IMR-90 (cell line): ENCODE measurements at regions of chr12 and their contacts with region 1.

Region 1: DNA sequence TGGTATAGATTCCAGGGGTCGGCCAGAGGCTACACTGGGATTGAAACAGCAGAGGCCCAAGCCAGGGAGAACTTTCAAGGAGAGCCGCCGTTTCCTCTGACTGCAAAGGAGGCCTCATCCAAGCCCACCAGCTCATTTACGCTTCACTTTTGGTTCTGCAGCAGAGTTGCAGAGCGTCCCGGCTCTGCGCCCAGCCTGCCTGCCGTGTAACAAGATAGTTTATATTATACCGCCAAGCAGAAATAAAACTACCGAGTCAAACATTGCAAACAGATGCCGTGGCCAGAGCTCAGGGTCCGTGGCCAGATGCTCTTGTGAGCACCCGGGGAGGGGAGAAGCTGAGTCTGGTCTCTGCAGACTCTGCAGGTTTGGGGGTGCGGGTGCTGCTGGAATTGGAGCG is 60.7 kb upstream of the TBX3 start:
- DNase-seq: peak; percentile 93
- ATAC-seq: peak; percentile 83
- H3K4me3 ChIP-seq: no peak overlapping the region
- H3K27ac ChIP-seq: peak overlapping the region; percentile 89
- H3K4me1 ChIP-seq: peaks cover 34% of the 10 kb centered on the region
- H3K27me3 ChIP-seq: no peaks in the 10 kb centered on the region
- CTCF ChIP-seq: no peak
- POLR2A ChIP-seq: no peak; the same call in 1 of the 2 replicates
- RAD21 ChIP-seq: no peak

Region 2: GRCh38 chr12:114848666-114849065 is 104.0 kb after region 1 on chr12:
- CTCF ChIA-PET with region 1: no interaction called
- POLR2A ChIA-PET with region 1: interaction called, 15 read pairs
- dilution Hi-C with region 1: no loop called
- in situ Hi-C with region 1: no loop called
- intact Hi-C with region 1: no loop called
- DNase-seq: peak; percentile 93
- ATAC-seq: peak; percentile 95
- H3K4me3 ChIP-seq: no peak overlapping the region
- H3K27ac ChIP-seq: no peak overlapping the region; the same call in 1 of the 2 replicates
- H3K4me1 ChIP-seq: peaks cover 9% of the 10 kb centered on the region
- H3K27me3 ChIP-seq: no peaks in the 10 kb centered on the region
- CTCF ChIP-seq: no peak
- POLR2A ChIP-seq: no peak
- RAD21 ChIP-seq: no peak

Region 3: GRCh38 chr12:114888448-114888847 is 143.8 kb after region 1 on chr12:
- CTCF ChIA-PET with region 1: no interaction called
- POLR2A ChIA-PET with region 1: no interaction called
- dilution Hi-C with region 1: no loop called
- in situ Hi-C with region 1: no loop called
- intact Hi-C with region 1: no loop called
- DNase-seq: peak; percentile 58
- ATAC-seq: no peak; the same call in 1 of the 2 replicates
- H3K4me3 ChIP-seq: no peak overlapping the region
- H3K27ac ChIP-seq: no peak overlapping the region
- H3K4me1 ChIP-seq: no peaks in the 10 kb centered on the region
- H3K27me3 ChIP-seq: no peaks in the 10 kb centered on the region
- CTCF ChIP-seq: no peak
- POLR2A ChIP-seq: no peak
- RAD21 ChIP-seq: no peak